GM12878 (cell line): ENCODE measurements at regions of chr19 and their contacts with region 1.

Region 1: DNA sequence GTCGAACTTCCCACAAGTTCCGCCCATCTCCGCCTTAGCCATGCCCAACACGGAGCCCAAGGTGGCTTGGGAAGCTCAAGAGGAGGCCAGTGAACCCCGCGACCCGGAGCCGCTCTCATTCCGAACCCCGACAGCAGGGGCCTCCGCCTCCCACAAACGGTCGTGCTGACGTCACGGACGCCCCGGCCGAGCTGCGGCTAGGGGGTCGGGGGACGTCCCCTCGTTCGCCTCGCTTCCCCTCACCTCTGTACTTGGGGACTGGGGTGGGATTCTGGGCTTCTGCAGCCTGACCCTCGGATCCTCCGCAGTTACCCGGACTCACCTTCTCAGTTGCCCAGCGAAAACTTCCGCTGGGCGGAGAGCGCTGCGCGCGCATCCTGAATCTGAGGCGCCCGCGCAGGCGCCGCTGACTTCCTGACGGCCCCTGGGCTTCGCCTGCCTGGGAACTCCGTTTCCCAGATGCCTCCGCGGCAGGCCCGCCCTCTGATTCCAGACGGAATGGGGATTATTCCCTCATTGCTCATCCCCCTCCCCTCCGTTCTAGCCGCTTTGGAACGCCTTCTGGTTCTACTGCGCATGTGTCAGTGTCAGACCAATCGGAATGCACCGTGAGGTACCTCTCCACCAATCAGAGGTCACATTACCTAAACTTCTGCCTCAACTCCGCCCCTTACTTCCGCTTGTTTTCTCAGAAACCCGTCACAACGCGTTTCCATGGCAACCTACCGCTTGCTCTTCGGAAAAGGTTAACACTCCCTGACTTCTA is at the start of gene VRK3:
- DNase-seq: peak; percentile 100
- ATAC-seq: peak; percentile 94
- H3K4me3 ChIP-seq: peak within 1 kb of the TSS; percentile 79
- H3K27ac ChIP-seq: peak within 1 kb of the TSS; percentile 81
- H3K4me1 ChIP-seq: peaks cover 16% of the 10 kb centered on the region
- H3K27me3 ChIP-seq: no peaks in the 10 kb centered on the region
- CTCF ChIP-seq: peak; percentile 0 to 13 (median 8); a peak in 1 of 6 replicates
- EP300 ChIP-seq: no peak
- POLR2A ChIP-seq: peak; percentile 88
- RAD21 ChIP-seq: no peak
- polyA plus RNA-seq, gene VRK3: 22.5 to 29.6 TPM

Region 2: GRCh38 chr19:49973987-49974386 is 51.2 kb before region 1 on chr19:
- CTCF ChIA-PET with region 1: no interaction called
- POLR2A ChIA-PET with region 1: no interaction called
- RAD21 ChIA-PET with region 1: no interaction called
- SMC1A ChIA-PET with region 1: no interaction called
- in situ Hi-C with region 1: no loop called
- intact Hi-C with region 1: no loop called
- DNase-seq: no peak
- ATAC-seq: no peak
- H3K4me3 ChIP-seq: no peak overlapping the region
- H3K27ac ChIP-seq: no peak overlapping the region
- H3K4me1 ChIP-seq: no peaks in the 10 kb centered on the region
- H3K27me3 ChIP-seq: no peaks in the 10 kb centered on the region
- CTCF ChIP-seq: no peak
- EP300 ChIP-seq: no peak
- POLR2A ChIP-seq: no peak
- RAD21 ChIP-seq: no peak

Region 3: GRCh38 chr19:50003810-50004419 is 21.3 kb before region 1 on chr19:
- CTCF ChIA-PET with region 1: no interaction called
- POLR2A ChIA-PET with region 1: interaction called, 10 read pairs
- RAD21 ChIA-PET with region 1: no interaction called
- SMC1A ChIA-PET with region 1: interaction called, 3 read pairs
- in situ Hi-C with region 1: no loop called
- intact Hi-C with region 1: no loop called
- DNase-seq: peak; percentile 44
- ATAC-seq: peak; percentile 93
- H3K4me3 ChIP-seq: 0 out of 2 replicates have a peak overlapping the region, but pooled peaks have one; percentile 55
- H3K27ac ChIP-seq: 0 out of 2 replicates have a peak overlapping the region, but pooled peaks have one; percentile 10
- H3K4me1 ChIP-seq: peaks cover 16% of the 10 kb centered on the region
- H3K27me3 ChIP-seq: no peaks in the 10 kb centered on the region
- CTCF ChIP-seq: no peak
- EP300 ChIP-seq: no peak
- POLR2A ChIP-seq: no peak
- RAD21 ChIP-seq: no peak

Region 4: GRCh38 chr19:51108066-51108804 is 1083.0 kb after region 1 on chr19 and contains the start of gene CTU1:
- CTCF ChIA-PET with region 1: no interaction called
- POLR2A ChIA-PET with region 1: no interaction called
- RAD21 ChIA-PET with region 1: no interaction called
- SMC1A ChIA-PET with region 1: no interaction called
- in situ Hi-C with region 1: loop called (anchors 10 kb)
- intact Hi-C with region 1: no loop called
- DNase-seq: peak; percentile 97
- ATAC-seq: peak; percentile 99
- H3K4me3 ChIP-seq: peak within 1 kb of the TSS; percentile 93
- H3K27ac ChIP-seq: peak within 1 kb of the TSS; percentile 66
- H3K4me1 ChIP-seq: no peaks in the 10 kb centered on the region
- H3K27me3 ChIP-seq: no peaks in the 10 kb centered on the region
- CTCF ChIP-seq: no peak
- EP300 ChIP-seq: no peak
- POLR2A ChIP-seq: peak; percentile 78
- RAD21 ChIP-seq: no peak
- polyA plus RNA-seq, gene CTU1: 0.02 TPM in 1 of 2 experiments, not detected in the other